ENCODE measurements at regions of chr1 and their contacts with region 1.

Region 1: GRCh38 chr1:65419681-65420589 is 533 bp upstream of the LEPR start:
- DNase-seq: peak; percentile 100
- H3K4me3 Mint-ChIP-seq: no peak overlapping the region
- H3K27ac Mint-ChIP-seq: peak overlapping the region; percentile 93
- H3K4me1 Mint-ChIP-seq: peaks cover 28% of the 10 kb centered on the region
- H3K27me3 Mint-ChIP-seq: peaks cover 7% of the 10 kb centered on the region

Region 2: GRCh38 chr1:63593303-63593885 is 1826.5 kb before region 1 on chr1 and contains the start of gene PGM1:
- intact Hi-C with region 1: loop called (anchors 10 kb)
- DNase-seq: peak; percentile 93
- H3K4me3 Mint-ChIP-seq: peak within 1 kb of the TSS; percentile 98
- H3K27ac Mint-ChIP-seq: peak within 1 kb of the TSS; percentile 100
- H3K4me1 Mint-ChIP-seq: peaks cover 36% of the 10 kb centered on the region
- H3K27me3 Mint-ChIP-seq: no peaks in the 10 kb centered on the region
- total RNA-seq, gene PGM1: 47.3 and 47.9 TPM in 2 replicates

Region 3: DNA sequence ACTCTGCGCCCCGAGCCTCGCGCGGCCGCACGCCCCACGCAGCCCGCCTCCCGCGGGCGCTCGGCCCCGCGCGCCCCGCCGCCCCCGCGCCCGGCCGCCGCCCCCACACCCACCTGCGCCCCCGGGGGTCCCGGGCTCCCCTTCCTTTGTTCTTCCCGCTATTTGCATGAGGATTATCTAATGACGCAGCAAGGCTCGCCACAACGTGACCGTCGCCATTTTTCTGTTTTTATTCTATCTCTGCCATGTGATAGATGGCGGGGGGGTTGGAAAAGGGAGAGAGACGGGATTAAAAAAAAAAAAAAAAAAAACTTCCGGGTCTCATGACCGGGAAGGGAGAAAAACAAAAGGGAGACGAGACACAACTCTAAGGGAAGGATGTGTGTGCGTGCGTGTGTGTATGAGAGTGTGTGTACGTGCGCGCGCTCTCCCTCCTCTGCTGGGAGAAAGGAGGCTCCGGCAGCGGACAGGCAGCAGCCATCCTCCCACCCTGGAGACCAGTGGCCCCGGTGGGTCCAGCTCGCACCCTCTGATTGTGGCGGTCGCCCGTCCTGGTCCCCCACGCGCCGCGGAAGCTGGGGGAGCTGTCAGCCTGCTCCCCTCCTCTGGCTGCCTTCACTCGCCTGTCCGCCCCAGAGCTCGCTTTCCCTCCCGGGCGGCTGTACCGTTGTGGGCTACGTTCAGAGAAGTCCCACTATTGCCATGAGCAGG is 352.3 kb before region 1 on chr1:
- intact Hi-C with region 1: loop called (anchors 5 kb)
- DNase-seq: peak; percentile 84
- H3K4me3 Mint-ChIP-seq: peak overlapping the region; percentile 85
- H3K27ac Mint-ChIP-seq: peak overlapping the region; percentile 97
- H3K4me1 Mint-ChIP-seq: peaks cover 33% of the 10 kb centered on the region
- H3K27me3 Mint-ChIP-seq: no peaks in the 10 kb centered on the region

Region 4: DNA sequence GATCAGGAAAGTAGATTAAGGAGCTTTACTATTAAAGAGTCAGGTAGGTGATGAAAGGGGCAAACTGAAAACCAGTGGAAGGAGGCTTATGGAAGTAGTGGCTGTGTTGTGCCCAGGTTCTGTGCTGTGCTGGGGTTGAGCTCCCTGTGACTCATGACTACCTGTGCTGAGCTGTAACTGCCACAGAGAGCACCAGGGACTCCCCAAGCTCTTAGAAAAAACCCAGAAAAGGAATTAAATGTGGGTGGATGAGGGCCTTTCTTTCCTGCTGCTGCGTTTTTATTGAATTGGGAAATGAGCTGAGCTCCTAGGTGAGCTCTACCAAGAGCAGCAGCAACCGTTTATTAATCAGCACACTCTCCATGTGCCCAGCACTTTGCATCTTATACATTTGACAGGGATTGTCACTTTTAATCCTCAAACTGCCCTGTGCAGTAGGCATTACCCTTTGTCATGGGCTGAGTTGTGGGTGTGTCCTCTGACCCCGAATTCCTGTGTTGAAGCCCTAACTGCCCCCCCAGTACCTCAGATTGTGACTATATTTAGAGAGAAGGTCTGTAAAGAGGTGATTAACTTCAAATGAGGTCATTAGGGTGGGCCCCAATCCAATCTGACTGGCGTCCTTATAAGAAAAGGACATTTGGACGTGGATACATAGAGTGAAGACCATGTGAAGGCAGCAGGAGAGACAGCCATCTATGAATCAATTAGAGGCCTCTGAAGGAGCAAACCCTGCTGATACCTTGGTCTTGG is 206.5 kb before region 1 on chr1:
- intact Hi-C with region 1: loop called (anchors 2 kb)
- DNase-seq: peak; percentile 63
- H3K4me3 Mint-ChIP-seq: peak overlapping the region; percentile 72
- H3K27ac Mint-ChIP-seq: peak overlapping the region; percentile 93
- H3K4me1 Mint-ChIP-seq: peaks cover 69% of the 10 kb centered on the region
- H3K27me3 Mint-ChIP-seq: no peaks in the 10 kb centered on the region

Region 5: DNA sequence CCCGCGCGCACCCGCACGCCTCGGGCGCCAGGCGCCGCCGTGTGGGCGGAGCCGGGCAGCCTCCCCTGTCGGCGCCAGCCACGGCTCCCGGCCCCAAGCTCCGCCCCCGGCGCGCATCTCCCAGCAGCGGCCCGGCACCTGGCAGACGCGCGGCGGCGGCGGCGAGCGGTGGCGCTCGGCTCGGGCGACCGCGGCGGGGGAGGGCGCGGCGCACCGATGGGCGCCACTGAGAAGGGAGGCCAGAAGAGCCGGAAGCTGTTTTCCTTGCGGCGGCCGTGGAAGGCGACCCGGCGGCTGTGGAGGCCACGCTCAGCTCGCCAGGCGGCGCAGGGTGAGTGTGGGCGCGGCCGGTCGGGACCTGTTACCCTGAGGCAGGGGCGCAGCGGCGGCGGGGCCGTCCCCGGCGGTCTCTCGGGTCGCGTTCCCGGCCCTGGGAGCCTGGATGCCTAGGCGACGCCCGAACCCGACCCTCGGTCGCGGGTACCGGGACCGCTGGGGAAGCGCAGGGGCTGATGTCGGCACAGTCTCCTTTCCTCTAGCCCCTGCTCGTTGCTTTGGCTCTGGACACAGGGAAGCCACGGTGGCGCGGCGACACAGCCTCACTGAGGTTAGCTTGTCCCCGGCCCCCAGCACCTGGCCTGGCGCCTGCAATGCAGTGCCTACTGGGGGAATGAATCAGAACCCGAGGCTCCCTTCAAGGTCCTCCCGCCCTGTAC is 165.5 kb before region 1 on chr1:
- intact Hi-C with region 1: loop called (anchors 1 kb)
- DNase-seq: peak; percentile 97
- H3K4me3 Mint-ChIP-seq: peak overlapping the region; percentile 95
- H3K27ac Mint-ChIP-seq: peak overlapping the region; percentile 79
- H3K4me1 Mint-ChIP-seq: peaks cover 21% of the 10 kb centered on the region
- H3K27me3 Mint-ChIP-seq: peaks cover 37% of the 10 kb centered on the region

Region 6: GRCh38 chr1:65297672-65298071 is 122.3 kb before region 1 on chr1:
- intact Hi-C with region 1: no loop called
- DNase-seq: no peak
- H3K4me3 Mint-ChIP-seq: no peak overlapping the region
- H3K27ac Mint-ChIP-seq: no peak overlapping the region
- H3K4me1 Mint-ChIP-seq: no peaks in the 10 kb centered on the region
- H3K27me3 Mint-ChIP-seq: peaks cover 6% of the 10 kb centered on the region

Region 7: GRCh38 chr1:65493802-65494201 is 73.9 kb after region 1 on chr1:
- intact Hi-C with region 1: no loop called
- DNase-seq: no peak
- H3K4me3 Mint-ChIP-seq: no peak overlapping the region
- H3K27ac Mint-ChIP-seq: no peak overlapping the region
- H3K4me1 Mint-ChIP-seq: no peaks in the 10 kb centered on the region
- H3K27me3 Mint-ChIP-seq: peaks cover 4% of the 10 kb centered on the region

Region 8: GRCh38 chr1:66924756-66925557 is 1505.0 kb after region 1 on chr1 and contains the starts of genes DNAI4 and MIER1:
- intact Hi-C with region 1: loop called (anchors 10 kb)
- DNase-seq: peak; percentile 99
- H3K4me3 Mint-ChIP-seq: peak within 1 kb of the TSS; percentile 99
- H3K27ac Mint-ChIP-seq: peak within 1 kb of the TSS; percentile 97
- H3K4me1 Mint-ChIP-seq: peaks cover 41% of the 10 kb centered on the region
- H3K27me3 Mint-ChIP-seq: no peaks in the 10 kb centered on the region
- total RNA-seq, gene DNAI4: 0.26 and 2.7 TPM in 2 replicates
- total RNA-seq, gene MIER1: 51.8 and 54.9 TPM in 2 replicates

Measured in activated CD4-positive, alpha-beta T cell treated with anti-CD3 and anti-CD28 coated beads, Interleukin-2, amount 10 ng/mL, durations not matched to agents 24 days and 14 days (primary cell).